Dendritic cell treated with granulocyte-macrophage colony-stimulating factor and Interleukin-4, amounts not matched to agents 40 ng/mL and 50 ng/mL, for 4 days (primary cell): ENCODE measurements at regions of chr14 and their contacts with region 1.

Region 1: GRCh38 chr14:22986508-22987054 is 4.2 kb upstream of the AJUBA start:
- H3K4me3 Mint-ChIP-seq: no peak overlapping the region
- H3K27ac Mint-ChIP-seq: no peak overlapping the region
- H3K4me1 Mint-ChIP-seq: no peaks in the 10 kb centered on the region
- H3K27me3 Mint-ChIP-seq: peaks cover 5% of the 10 kb centered on the region

Region 2: GRCh38 chr14:22556990-22557623 is 429.5 kb before region 1 on chr14:
- intact Hi-C with region 1: loop called (anchors 1 kb)
- H3K4me3 Mint-ChIP-seq: peak overlapping the region; percentile 71
- H3K27ac Mint-ChIP-seq: peak overlapping the region; percentile 17
- H3K4me1 Mint-ChIP-seq: peaks cover 30% of the 10 kb centered on the region
- H3K27me3 Mint-ChIP-seq: peaks cover 1% of the 10 kb centered on the region

Region 3: GRCh38 chr14:22900081-22900799 is 86.3 kb before region 1 on chr14:
- intact Hi-C with region 1: no loop called
- H3K4me3 Mint-ChIP-seq: no peak overlapping the region
- H3K27ac Mint-ChIP-seq: no peak overlapping the region
- H3K4me1 Mint-ChIP-seq: peaks cover 4% of the 10 kb centered on the region
- H3K27me3 Mint-ChIP-seq: no peaks in the 10 kb centered on the region

Region 4: DNA sequence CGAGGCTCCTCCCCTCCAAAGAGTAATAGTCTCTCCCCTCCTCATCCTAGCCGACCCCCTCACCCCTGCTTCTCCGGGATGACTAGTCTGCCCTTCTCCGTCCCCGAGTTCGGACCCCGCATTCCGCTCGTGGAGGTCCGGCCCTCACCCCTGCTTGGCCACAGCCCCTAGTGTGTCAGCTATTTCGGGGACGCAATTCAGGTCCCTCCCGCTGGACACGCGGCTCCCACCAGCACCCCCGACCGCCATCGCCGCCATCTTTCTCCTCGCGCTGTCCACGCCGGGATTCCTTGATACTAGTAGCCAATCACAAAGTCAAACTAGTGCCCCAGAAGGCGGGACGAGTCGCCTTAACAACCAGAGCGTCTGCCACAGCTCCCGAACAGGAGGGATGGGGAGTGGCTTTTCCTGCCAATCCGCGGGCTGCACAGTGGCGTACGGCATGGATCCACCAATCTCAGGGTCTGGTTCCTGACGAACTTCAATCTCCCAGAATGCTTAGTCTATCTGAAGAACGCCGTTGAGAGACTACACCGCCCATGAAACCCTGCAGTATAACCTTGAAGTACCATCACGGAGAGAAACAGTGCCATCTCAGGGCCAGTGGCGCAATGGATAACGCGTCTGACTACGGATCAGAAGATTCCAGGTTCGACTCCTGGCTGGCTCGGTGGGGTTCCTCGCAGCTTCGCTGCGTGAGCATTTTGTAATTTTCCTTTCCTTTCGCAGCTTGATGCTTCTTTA is 57.3 kb before region 1 on chr14 and contains the start of gene PRMT5:
- intact Hi-C with region 1: loop called (anchors 2 kb)
- H3K4me3 Mint-ChIP-seq: no peak within 1 kb of the TSS
- H3K27ac Mint-ChIP-seq: no peak within 1 kb of the TSS
- H3K4me1 Mint-ChIP-seq: peaks cover 17% of the 10 kb centered on the region
- H3K27me3 Mint-ChIP-seq: no peaks in the 10 kb centered on the region

Region 5: DNA sequence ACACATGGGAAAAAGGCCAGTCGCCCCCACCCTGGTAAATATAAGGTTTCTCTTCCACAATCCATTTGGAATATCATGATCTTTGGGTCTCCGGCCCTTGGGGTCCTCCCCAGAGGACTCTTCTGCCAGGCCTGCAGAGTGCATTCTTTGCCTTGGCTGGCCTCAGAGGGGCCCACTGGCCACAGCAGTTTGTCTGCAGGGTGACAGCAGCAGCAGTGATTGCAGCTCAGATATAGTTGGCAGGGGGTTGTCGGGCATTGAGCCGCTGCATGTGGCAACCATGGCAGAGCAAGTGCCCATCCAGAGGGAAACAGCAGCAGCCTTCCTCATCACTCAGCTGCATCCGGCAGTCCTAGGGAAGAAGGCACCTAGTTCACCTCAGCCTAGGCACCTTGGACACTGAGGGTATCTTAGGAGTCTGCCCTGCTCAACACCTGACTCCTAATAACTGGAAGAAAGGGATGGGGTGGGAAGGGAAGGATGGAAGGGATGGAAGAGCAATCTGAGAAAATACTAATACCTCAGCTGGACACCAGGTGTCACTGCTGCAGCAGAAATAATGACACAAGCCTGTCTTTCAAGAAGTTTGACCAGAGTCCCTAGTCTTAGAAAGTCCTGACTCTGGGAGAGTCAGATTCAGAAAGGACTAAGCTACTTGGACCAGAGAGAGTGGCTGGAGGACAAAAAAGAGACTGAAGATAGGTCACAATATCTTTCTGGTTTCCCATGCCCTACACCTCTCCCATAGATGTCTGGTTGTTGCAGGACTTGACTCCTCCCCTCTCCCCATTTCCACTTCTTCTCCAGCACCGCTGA is 13.2 kb before region 1 on chr14:
- intact Hi-C with region 1: loop called (anchors 1 kb)
- H3K4me3 Mint-ChIP-seq: no peak overlapping the region
- H3K27ac Mint-ChIP-seq: no peak overlapping the region
- H3K4me1 Mint-ChIP-seq: peaks cover 5% of the 10 kb centered on the region
- H3K27me3 Mint-ChIP-seq: peaks cover 28% of the 10 kb centered on the region

Region 6: DNA sequence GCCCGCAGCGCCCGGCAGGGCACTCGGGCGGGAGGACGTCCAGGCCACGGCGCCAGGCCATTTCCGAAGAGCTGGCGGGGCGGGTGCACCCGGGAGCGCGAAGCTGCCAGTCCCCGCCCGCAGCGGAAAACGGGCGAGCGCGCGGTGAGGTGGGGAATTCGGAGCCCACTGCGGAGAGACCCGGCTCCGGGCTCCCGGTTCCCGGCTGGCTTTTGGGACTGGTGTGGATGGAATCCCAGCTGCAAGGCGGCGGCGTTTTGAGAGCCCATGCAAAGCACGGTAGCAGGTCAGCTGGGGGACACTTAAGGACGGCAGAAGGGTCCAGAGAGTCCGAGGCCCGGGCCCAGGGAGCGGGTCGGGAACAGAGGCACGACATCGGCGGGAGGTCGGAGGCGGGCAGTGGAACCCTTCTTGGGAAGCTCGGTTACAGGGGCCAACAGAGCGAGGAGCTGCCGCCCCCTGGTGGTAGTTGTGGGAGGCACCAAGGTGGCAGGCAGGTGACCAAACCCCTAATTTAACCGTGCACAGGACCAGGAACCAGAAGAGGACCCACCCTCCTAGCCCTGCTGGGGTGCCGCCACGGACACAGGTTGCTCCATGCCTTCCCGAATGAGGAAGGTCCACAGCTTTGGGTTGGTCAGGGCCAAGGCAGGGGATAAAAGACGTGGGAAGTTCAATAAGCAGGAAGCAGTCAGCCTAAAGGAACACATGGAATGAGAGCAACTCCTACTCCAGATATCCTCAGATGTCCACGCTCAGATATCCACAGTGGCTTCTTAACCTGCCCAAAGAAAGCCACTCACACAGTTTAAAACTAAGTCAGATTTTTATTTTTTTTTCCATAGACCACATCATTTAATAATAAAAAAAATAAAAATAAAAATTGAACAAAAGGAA is 71.4 kb after region 1 on chr14:
- intact Hi-C with region 1: loop called (anchors 1 kb)
- H3K4me3 Mint-ChIP-seq: peak overlapping the region; percentile 78
- H3K27ac Mint-ChIP-seq: no peak overlapping the region
- H3K4me1 Mint-ChIP-seq: peaks cover 30% of the 10 kb centered on the region
- H3K27me3 Mint-ChIP-seq: peaks cover 20% of the 10 kb centered on the region